ENCODE measurements at regions of chr21 and their contacts with region 1.

Region 1: DNA sequence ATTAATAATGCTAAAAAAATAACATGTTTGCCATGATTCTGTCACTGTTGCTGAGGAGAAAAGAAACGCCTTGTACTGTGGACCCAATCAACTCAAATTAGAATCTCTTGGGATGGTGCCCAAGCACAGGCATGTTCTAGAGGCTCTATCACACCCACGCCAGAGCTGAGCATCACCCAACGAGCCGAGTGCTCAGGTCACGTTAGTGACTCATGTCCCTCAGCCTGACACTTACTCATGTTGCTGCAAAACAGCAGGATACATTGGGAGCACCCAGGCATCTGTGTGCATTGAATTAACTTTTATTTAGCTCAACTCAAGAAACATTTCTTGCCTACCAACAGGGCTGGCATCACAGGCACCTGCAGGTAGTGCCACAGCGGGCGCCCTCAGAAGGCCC is 149.7 kb downstream of the ETS2 start:
- DNase-seq: peak; percentile 54

Region 2: GRCh38 chr21:38979228-38980121 is 24.0 kb after region 1 on chr21:
- intact Hi-C with region 1: loop called in 1 of 2 experiments (anchors 1 kb)
- DNase-seq: peak; percentile 36

Region 3: DNA sequence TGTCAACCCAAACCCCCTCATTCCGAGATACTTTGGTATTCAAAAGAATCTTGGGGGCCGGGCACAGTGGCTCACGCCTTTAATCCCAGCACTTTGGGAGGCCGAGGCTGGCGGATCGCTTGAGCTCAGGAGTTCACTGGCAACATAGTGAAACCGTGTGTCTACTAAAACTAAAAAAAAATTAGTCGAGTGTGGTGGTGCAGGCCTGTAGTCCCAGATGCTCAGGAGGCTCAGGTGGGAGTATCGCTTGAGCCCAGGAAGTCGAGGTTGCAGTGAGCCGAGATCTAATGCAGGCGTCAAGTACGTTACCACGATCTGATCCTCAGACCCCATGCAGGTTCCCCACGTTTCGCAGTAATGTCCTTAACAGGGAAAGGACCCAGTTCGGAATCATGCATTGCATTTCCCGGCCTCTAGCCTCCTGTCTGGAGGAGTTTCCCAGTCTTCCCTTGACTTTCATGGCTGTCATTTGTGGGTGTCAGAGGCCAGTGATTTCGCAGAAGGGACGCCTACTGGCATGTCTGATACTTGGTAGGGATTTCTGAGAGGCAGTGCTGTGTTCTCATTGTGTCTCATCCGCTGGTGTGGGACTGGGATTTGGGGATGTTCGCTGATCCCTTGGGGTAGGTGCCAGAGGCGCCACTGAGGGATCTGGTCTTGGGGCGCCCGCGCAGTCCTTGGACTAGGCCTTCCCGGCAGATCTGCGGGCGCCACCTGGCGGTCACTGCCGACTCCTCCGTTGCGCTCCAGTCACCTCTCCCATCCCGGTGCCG is 432.8 kb after region 1 on chr21:
- intact Hi-C with region 1: no loop called
- DNase-seq: peak; percentile 98